ENCODE measurements at regions of chr7 and their contacts with region 1.

Region 1: GRCh38 chr7:42161738-42162137 is 75.3 kb downstream of the GLI3 start:
- DNase-seq: no peak
- ATAC-seq: no peak
- H3K4me3 ChIP-seq: no peak overlapping the region
- H3K27ac ChIP-seq: no peak overlapping the region
- H3K4me1 ChIP-seq: peaks cover 0 to 10% (median 0%) of the 10 kb centered on the region in 9 donors
- H3K27me3 ChIP-seq: no peaks in the 10 kb centered on the region
- CTCF ChIP-seq: no peak

Region 2: GRCh38 chr7:42227936-42228591 is 66.3 kb after region 1 on chr7:
- intact Hi-C with region 1: loop called in 1 of 10 experiments (anchors 10 kb)
- DNase-seq: peak in 1 of 2 donors; percentile 20
- ATAC-seq: peak; percentile 38 to 84 (median 77)
- H3K4me3 ChIP-seq: peak overlapping the region in 8 of 10 donors; percentile 7 to 50 (median 38)
- H3K27ac ChIP-seq: no peak overlapping the region
- H3K4me1 ChIP-seq: peaks cover 0 to 23% (median 0%) of the 10 kb centered on the region in 9 donors
- H3K27me3 ChIP-seq: peaks cover 0 to 49% (median 13%) of the 10 kb centered on the region in 7 donors
- CTCF ChIP-seq: no peak